ENCODE measurements at regions of chr12 and their contacts with region 1.

Region 1: GRCh38 chr12:111993292-111994150 is 19.4 kb downstream of the TMEM116 start:
- DNase-seq: peak in 7 of 9 donors; percentile 68 to 83 (median 74)
- ATAC-seq: peak; percentile 87
- H3K4me3 ChIP-seq: peak overlapping the region; percentile 68
- H3K4me3 Mint-ChIP-seq: peak overlapping the region; percentile 79 to 99 (median 86)
- H3K27ac ChIP-seq: peak overlapping the region; percentile 71
- H3K27ac Mint-ChIP-seq: peak overlapping the region; percentile 80 to 97 (median 91)
- H3K4me1 ChIP-seq: peaks cover 61 to 62% of the 10 kb centered on the region in 2 donors
- H3K4me1 Mint-ChIP-seq: peaks cover 48 to 85% (median 75%) of the 10 kb centered on the region in 7 donors
- H3K27me3 ChIP-seq: no peaks in the 10 kb centered on the region
- H3K27me3 Mint-ChIP-seq: no peaks in the 10 kb centered on the region

Region 2: DNA sequence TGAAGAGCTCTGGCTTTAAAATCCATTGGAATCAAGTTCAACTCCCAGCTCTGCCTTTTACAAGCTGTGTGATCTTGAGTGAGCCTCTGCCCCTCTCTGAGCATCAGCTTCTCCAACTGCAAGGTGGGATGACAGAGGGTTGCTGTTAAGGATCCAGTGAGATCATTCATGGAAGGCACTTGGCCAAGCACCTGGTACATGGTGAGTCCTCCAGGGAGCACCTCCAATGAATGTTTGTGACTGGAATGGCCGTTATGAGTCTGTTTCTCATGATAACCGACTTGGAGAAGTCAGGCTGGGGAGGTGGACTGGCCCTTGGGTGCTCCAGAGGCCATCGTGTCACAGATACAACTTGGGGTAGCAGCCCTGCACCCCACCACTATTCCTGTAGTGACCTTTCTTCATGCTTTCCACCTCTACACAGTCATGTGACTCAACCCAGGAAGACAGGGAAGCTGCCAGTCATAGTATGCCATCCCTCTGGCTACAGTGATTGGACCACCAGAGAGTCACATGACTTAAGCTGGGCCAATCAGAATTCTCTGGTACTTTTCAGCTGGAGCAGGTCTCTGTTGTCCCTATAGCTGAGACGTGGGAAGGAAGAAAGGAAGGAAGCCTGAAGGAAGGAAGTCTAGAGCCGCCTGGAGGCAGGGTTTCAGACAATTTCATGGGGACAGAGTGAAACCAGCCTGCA is 926.6 kb before region 1 on chr12:
- CTCF ChIA-PET with region 1: no interaction called
- POLR2A ChIA-PET with region 1: no interaction called
- intact Hi-C with region 1: no loop called
- DNase-seq: no peak
- ATAC-seq: no peak
- H3K4me3 ChIP-seq: no peak overlapping the region
- H3K4me3 Mint-ChIP-seq: peak overlapping the region in 1 of 10 donors; percentile 17
- H3K27ac ChIP-seq: no peak overlapping the region
- H3K27ac Mint-ChIP-seq: peak overlapping the region in 4 of 9 donors; percentile 45 to 91 (median 52)
- H3K4me1 ChIP-seq: peaks cover 0 to 16% of the 10 kb centered on the region in 2 donors
- H3K4me1 Mint-ChIP-seq: peaks cover 11 to 31% (median 23%) of the 10 kb centered on the region in 7 donors
- H3K27me3 ChIP-seq: no peaks in the 10 kb centered on the region
- H3K27me3 Mint-ChIP-seq: peaks cover 0 to 15% (median 0%) of the 10 kb centered on the region in 5 donors

Region 3: DNA sequence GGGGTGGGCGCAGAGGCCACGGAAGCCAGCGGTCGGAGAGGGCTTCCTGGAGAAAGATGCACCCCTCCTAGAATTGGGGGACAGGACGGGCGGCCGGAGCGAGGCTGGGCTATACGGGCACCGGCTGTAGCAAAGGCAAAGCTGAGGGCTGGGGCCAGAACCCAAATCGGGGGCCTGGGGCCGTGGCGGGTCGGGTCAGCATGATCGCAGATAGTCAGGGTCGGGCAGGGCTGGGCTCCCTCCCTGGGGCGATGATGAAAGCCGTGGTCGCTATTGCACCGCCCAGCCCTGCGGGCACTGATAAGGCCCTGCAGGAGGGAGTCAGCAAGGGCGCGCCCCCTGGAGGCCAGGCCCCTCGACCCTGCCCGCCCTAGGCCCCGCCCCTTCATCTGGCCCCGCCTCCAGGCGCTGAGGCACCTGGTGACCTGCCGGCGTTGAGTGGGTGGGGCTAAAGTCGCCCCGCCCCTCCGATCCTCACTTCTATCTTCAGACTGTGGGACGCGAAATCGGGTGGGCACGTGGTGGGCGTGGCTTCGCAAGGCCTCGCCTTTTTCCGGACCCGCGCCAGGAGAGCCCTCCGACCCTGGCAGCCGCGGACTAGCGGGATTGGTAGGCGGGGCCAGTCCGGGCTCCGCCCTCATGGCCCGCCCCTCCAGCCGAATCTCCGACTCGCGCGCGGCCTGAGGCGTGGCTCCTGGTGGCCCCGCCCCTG is 588.2 kb before region 1 on chr12:
- CTCF ChIA-PET with region 1: no interaction called
- POLR2A ChIA-PET with region 1: no interaction called
- intact Hi-C with region 1: no loop called
- DNase-seq: peak; percentile 96 to 98 (median 97)
- ATAC-seq: peak; percentile 89
- H3K4me3 ChIP-seq: peak overlapping the region; percentile 68
- H3K4me3 Mint-ChIP-seq: peak overlapping the region; percentile 78 to 96 (median 90)
- H3K27ac ChIP-seq: peak overlapping the region; percentile 97
- H3K27ac Mint-ChIP-seq: peak overlapping the region; percentile 75 to 96 (median 89)
- H3K4me1 ChIP-seq: peaks cover 50 to 53% of the 10 kb centered on the region in 2 donors
- H3K4me1 Mint-ChIP-seq: peaks cover 34 to 63% (median 53%) of the 10 kb centered on the region in 7 donors
- H3K27me3 ChIP-seq: no peaks in the 10 kb centered on the region
- H3K27me3 Mint-ChIP-seq: no peaks in the 10 kb centered on the region

Region 4: DNA sequence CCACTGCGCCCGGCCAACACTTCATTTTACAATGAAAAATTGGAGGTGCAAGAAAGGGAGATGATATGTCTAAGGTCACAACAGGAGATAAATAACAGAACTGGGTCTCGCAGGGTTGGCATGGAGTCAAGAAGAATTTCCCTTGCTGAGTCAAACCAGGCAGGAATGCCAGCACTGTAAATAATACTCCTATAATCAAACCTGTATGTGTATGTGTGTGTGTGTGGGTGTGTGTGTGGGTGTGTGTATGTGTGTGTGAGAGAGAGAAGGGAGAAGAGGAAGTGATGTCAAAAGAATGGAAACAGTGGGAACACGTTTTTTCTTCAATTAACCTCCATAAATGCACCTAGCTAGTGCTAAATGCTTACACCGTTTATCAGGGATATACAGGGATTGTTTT is 51.0 kb before region 1 on chr12:
- CTCF ChIA-PET with region 1: interaction called, 8 read pairs
- POLR2A ChIA-PET with region 1: interaction called, 24 read pairs
- intact Hi-C with region 1: loop called in 1 of 2 experiments (anchors 1 kb)
- DNase-seq: no peak
- ATAC-seq: no peak
- H3K4me3 ChIP-seq: no peak overlapping the region
- H3K4me3 Mint-ChIP-seq: no peak overlapping the region
- H3K27ac ChIP-seq: no peak overlapping the region
- H3K27ac Mint-ChIP-seq: no peak overlapping the region
- H3K4me1 ChIP-seq: peaks cover 0 to 3% of the 10 kb centered on the region in 2 donors
- H3K4me1 Mint-ChIP-seq: peaks cover 0 to 25% (median 12%) of the 10 kb centered on the region in 7 donors
- H3K27me3 ChIP-seq: no peaks in the 10 kb centered on the region
- H3K27me3 Mint-ChIP-seq: no peaks in the 10 kb centered on the region

Region 5: GRCh38 chr12:111953455-111953854 is 40.1 kb before region 1 on chr12:
- CTCF ChIA-PET with region 1: no interaction called
- POLR2A ChIA-PET with region 1: interaction called, 6 read pairs
- intact Hi-C with region 1: loop called in 1 of 2 experiments (anchors 1 kb)
- DNase-seq: no peak
- ATAC-seq: no peak
- H3K4me3 ChIP-seq: no peak overlapping the region
- H3K4me3 Mint-ChIP-seq: no peak overlapping the region
- H3K27ac ChIP-seq: no peak overlapping the region
- H3K27ac Mint-ChIP-seq: peak overlapping the region in 4 of 9 donors; percentile 16 to 68 (median 26)
- H3K4me1 ChIP-seq: peaks cover 11 to 13% of the 10 kb centered on the region in 2 donors
- H3K4me1 Mint-ChIP-seq: peaks cover 15 to 46% (median 33%) of the 10 kb centered on the region in 7 donors
- H3K27me3 ChIP-seq: no peaks in the 10 kb centered on the region
- H3K27me3 Mint-ChIP-seq: no peaks in the 10 kb centered on the region

Region 6: DNA sequence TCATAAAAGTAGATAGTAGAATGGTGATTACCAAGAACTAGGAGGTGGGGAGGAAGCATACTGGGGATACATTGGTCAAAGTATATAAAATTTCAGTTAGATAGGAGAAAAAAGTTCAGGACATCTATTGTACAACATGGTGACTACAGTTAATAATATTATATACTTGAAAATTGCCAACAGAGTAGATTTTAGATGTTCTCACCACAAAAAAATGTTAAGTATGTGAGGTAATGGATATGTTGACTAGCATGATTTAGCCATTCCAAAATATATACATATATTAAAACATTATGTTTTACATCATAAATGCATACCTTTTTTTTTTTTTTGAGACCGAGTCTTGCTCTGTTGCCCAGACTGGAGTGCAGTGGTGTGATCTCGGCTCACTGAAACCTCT is 11.5 kb before region 1 on chr12:
- CTCF ChIA-PET with region 1: no interaction called
- POLR2A ChIA-PET with region 1: interaction called, 9 read pairs
- intact Hi-C with region 1: loop called in 1 of 2 experiments (anchors 1 kb)
- DNase-seq: no peak
- ATAC-seq: no peak
- H3K4me3 ChIP-seq: no peak overlapping the region
- H3K4me3 Mint-ChIP-seq: no peak overlapping the region
- H3K27ac ChIP-seq: no peak overlapping the region
- H3K27ac Mint-ChIP-seq: peak overlapping the region in 1 of 9 donors; percentile 19
- H3K4me1 ChIP-seq: no peaks in the 10 kb centered on the region
- H3K4me1 Mint-ChIP-seq: peaks cover 0 to 43% (median 22%) of the 10 kb centered on the region in 7 donors
- H3K27me3 ChIP-seq: no peaks in the 10 kb centered on the region
- H3K27me3 Mint-ChIP-seq: no peaks in the 10 kb centered on the region

Region 7: GRCh38 chr12:112005419-112006395 is 12.2 kb after region 1 on chr12:
- CTCF ChIA-PET with region 1: interaction called, 10 read pairs
- POLR2A ChIA-PET with region 1: interaction called, 43 read pairs
- intact Hi-C with region 1: loop called in 1 of 2 experiments (anchors 1 kb)
- DNase-seq: no peak
- ATAC-seq: no peak
- H3K4me3 ChIP-seq: no peak overlapping the region
- H3K4me3 Mint-ChIP-seq: no peak overlapping the region
- H3K27ac ChIP-seq: peak overlapping the region; percentile 50
- H3K27ac Mint-ChIP-seq: peak overlapping the region in 8 of 9 donors; percentile 21 to 97 (median 71)
- H3K4me1 ChIP-seq: peaks cover 21 to 23% of the 10 kb centered on the region in 2 donors
- H3K4me1 Mint-ChIP-seq: peaks cover 29 to 70% (median 57%) of the 10 kb centered on the region in 7 donors
- H3K27me3 ChIP-seq: no peaks in the 10 kb centered on the region
- H3K27me3 Mint-ChIP-seq: no peaks in the 10 kb centered on the region

Region 8: DNA sequence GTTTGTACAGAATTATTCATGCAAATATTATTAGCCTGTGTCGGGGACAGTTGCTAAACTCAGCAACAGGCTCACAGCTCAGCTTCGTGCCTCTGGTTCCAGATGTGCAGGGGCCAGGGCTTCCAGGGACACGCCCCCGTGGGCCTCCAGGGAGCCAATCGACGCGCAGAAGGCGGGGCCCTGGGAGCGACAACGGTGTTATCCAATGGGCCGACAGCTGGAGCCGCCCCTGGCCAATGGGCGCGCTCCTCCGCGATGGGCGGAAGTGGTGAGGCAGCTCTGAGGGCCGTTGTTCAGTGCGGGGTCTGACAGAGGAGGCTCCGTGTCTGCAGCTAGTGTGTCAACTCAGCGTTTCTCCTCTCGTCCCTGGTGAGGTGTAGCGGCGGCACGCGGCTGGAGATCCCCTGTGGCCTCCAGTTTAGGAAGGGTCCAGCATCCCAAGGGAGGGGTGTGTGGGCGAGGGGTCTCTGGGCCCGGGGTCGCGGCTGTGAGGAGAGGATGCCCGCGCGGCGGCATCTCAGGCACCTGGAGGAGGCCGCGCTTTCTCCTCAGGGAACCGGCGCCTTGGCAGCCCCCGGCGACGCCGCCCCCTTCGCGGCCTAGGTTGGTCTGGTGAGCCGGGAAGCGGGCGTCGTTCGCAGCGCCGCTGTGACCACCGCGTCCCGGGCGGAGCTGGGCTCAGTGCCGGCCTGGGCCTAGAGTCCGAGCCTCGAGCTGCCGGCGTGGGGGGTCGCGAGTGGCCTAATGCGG is 131.9 kb after region 1 on chr12 and contains the start of gene TRAFD1:
- CTCF ChIA-PET with region 1: no interaction called
- POLR2A ChIA-PET with region 1: interaction called, 3 read pairs
- intact Hi-C with region 1: loop called (anchors 2 to 5 kb)
- DNase-seq: peak; percentile 96 to 99 (median 98)
- ATAC-seq: peak; percentile 100
- H3K4me3 ChIP-seq: peak within 1 kb of the TSS; percentile 97
- H3K4me3 Mint-ChIP-seq: peak within 1 kb of the TSS; percentile 74 to 91 (median 88)
- H3K27ac ChIP-seq: peak within 1 kb of the TSS; percentile 93
- H3K27ac Mint-ChIP-seq: peak within 1 kb of the TSS; percentile 77 to 95 (median 88)
- H3K4me1 ChIP-seq: peaks cover 26 to 38% of the 10 kb centered on the region in 2 donors
- H3K4me1 Mint-ChIP-seq: peaks cover 21 to 49% (median 39%) of the 10 kb centered on the region in 7 donors
- H3K27me3 ChIP-seq: no peaks in the 10 kb centered on the region
- H3K27me3 Mint-ChIP-seq: peaks cover 0 to 10% (median 0%) of the 10 kb centered on the region in 5 donors
- total RNA-seq, gene TRAFD1: 22.1 to 86.6 (median 42.7) TPM

Region 9: GRCh38 chr12:112130441-112130998 is 137.0 kb after region 1 on chr12:
- CTCF ChIA-PET with region 1: no interaction called
- POLR2A ChIA-PET with region 1: interaction called, 3 read pairs
- intact Hi-C with region 1: loop called (anchors 2 to 5 kb)
- DNase-seq: peak in 7 of 9 donors; percentile 38 to 75 (median 67)
- ATAC-seq: peak; percentile 89
- H3K4me3 ChIP-seq: peak overlapping the region; percentile 33
- H3K4me3 Mint-ChIP-seq: peak overlapping the region in 9 of 10 donors; percentile 52 to 81 (median 70)
- H3K27ac ChIP-seq: peak overlapping the region; percentile 72
- H3K27ac Mint-ChIP-seq: peak overlapping the region; percentile 3 to 91 (median 85)
- H3K4me1 ChIP-seq: peaks cover 38 to 55% of the 10 kb centered on the region in 2 donors
- H3K4me1 Mint-ChIP-seq: peaks cover 32 to 72% (median 59%) of the 10 kb centered on the region in 7 donors
- H3K27me3 ChIP-seq: no peaks in the 10 kb centered on the region
- H3K27me3 Mint-ChIP-seq: no peaks in the 10 kb centered on the region

Measured in naive thymus-derived CD4-positive, alpha-beta T cell (primary cell).